ENCODE measurements at regions of chr7 and their contacts with region 1.

Region 1: DNA sequence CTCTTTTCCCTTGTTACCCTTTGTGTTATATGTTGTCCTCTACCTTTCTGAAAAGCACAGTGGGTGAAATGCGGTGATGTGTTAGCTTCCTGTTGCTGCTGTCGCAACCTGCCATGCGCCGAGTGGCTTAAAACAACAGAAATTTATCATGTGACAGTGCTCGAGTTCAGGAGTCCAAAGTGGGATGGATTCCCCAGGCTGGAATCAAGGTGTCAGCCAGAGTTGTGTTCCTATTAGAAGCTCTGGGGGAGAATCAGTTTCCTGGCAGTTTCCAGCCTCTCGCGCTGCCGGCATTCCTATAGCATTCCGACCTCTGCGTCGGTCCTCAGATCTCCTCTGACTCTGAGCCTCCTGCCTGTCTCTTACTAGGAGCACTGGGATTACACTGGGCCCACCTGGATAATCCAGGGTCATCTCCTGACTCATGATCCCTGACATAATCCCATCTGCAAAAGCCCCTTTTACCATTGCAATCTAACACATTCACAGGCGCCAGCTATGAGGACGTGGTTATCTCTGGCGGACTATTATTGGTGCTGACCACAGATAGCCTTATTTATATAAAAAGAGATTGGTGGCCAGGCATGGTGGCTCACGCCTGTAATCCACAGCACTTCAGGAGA is 207.5 kb downstream of the CUX1 start:
- DNase-seq: peak; percentile 98
- ATAC-seq: peak; percentile 98
- H3K4me3 ChIP-seq: peak overlapping the region; percentile 13 to 50 (median 28); a peak in 5 of 6 replicates
- H3K27ac ChIP-seq: peak overlapping the region; percentile 88
- H3K4me1 ChIP-seq: peaks cover 39% of the 10 kb centered on the region
- H3K27me3 ChIP-seq: no peaks in the 10 kb centered on the region
- CTCF ChIP-seq: no peak
- EP300 ChIP-seq: peak in 1 of 2 experiments; percentile 67; a peak in 1 of 4 replicates
- POLR2A ChIP-seq: peak; percentile 61 to 88; a peak in 3 of 4 replicates
- RAD21 ChIP-seq: peak; percentile 47; the same call in 1 of the 2 replicates

Region 2: GRCh38 chr7:101953248-101953819 is 71.5 kb before region 1 on chr7:
- CTCF ChIA-PET with region 1: no interaction called
- POLR2A ChIA-PET with region 1: no interaction called
- in situ Hi-C with region 1: no loop called
- intact Hi-C with region 1: no loop called
- DNase-seq: no peak
- ATAC-seq: no peak
- H3K4me3 ChIP-seq: no peak overlapping the region
- H3K27ac ChIP-seq: no peak overlapping the region
- H3K4me1 ChIP-seq: no peaks in the 10 kb centered on the region
- H3K27me3 ChIP-seq: no peaks in the 10 kb centered on the region
- CTCF ChIP-seq: no peak
- EP300 ChIP-seq: no peak
- POLR2A ChIP-seq: no peak
- RAD21 ChIP-seq: no peak

Region 3: DNA sequence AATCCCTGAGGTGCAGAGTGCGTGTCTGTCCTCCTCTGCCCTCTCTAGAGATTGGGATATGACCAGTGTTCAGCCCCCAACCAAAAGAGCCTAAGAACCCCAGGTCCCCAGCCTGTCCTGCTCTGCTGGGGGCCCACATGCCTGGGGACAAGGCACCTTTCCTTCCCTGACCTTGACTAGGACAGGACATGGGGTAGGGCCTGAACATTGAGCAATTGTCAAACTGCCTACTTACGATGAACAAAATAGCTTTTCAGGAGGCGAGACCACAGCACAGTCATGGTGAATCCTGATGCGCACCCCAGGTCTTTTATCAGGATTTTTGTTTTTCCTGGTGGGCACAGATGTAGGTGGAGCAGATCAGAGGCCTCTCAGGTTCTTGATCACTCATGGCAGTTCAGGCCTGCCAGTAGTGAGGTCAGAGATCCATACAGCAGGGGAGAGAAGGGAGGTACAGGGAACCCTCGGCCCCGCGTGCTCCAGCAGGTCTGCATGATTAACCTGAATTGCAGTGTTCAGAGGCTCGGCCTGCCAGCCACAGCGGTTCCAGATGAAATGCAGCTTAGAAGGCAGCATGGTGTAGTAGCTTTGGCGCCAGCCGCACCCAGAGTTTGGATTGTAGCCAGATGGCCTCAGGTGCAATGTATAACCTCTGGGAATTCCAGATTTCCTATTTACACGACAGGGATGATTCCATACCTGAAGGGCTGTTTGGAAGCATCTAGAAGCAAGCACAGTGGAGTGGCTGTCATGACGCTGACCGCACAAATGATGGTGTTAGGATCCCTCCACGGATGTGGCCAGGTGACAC is 16.1 kb before region 1 on chr7:
- CTCF ChIA-PET with region 1: no interaction called
- POLR2A ChIA-PET with region 1: interaction called, 59 read pairs
- in situ Hi-C with region 1: no loop called
- intact Hi-C with region 1: no loop called
- DNase-seq: no peak
- ATAC-seq: peak; percentile 58
- H3K4me3 ChIP-seq: no peak overlapping the region
- H3K27ac ChIP-seq: peak overlapping the region; percentile 44
- H3K4me1 ChIP-seq: peaks cover 41% of the 10 kb centered on the region
- H3K27me3 ChIP-seq: no peaks in the 10 kb centered on the region
- CTCF ChIP-seq: no peak
- EP300 ChIP-seq: no peak
- POLR2A ChIP-seq: no peak
- RAD21 ChIP-seq: no peak

Region 4: DNA sequence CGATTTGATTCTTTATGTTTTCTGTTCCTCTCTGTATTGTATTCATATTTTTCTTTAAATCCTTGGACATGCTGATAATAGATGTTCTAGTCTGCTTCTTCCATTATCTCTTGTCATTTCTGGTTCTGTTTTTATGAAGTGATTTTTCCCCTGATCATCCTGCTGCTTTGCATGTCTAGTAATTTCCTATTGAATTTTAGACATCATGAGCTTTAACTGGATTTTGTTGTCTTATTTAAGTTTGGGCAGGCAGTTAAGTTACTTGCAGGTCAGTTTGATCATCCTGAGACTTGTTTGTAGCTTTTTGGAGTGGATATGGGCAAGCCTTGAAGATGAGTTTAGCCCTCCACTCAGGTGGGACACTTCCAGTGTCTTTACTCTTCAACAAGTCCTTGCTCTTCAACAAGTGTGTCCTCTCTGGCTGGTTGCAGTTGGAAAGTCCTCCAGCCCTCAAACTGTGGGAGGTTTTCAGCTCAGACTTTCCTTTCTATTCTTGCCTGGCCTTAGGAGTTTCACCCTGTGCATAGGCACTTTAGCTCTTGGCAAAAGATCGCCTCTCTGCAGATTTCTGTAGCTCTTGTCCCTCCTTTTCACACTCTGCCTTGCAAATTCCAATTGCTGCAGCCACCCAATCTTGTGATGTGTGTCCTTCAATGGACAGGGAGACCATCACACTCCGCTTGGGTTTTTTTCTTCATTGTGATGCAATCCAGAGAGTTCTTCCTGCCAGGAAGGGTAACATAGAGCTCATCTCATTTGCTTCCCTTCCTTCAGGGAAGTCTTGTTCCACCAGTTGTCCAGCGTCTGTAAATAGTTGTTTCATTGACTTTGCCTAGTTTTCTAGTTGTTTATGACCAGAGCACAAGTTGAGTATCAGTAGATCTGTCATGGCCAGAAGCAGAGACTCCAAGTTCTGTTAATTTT is 64.6 kb after region 1 on chr7:
- CTCF ChIA-PET with region 1: no interaction called
- POLR2A ChIA-PET with region 1: interaction called, 11 read pairs
- in situ Hi-C with region 1: no loop called
- intact Hi-C with region 1: no loop called
- DNase-seq: peak; percentile 12
- ATAC-seq: no peak
- H3K4me3 ChIP-seq: no peak overlapping the region
- H3K27ac ChIP-seq: no peak overlapping the region
- H3K4me1 ChIP-seq: peaks cover 5% of the 10 kb centered on the region; the same call in 1 of the 2 replicates
- H3K27me3 ChIP-seq: no peaks in the 10 kb centered on the region
- CTCF ChIP-seq: no peak
- EP300 ChIP-seq: no peak
- POLR2A ChIP-seq: no peak
- RAD21 ChIP-seq: no peak

Measured in HepG2 (cell line).